ENCODE measurements at regions of chr5 and their contacts with region 1.

Region 1: DNA sequence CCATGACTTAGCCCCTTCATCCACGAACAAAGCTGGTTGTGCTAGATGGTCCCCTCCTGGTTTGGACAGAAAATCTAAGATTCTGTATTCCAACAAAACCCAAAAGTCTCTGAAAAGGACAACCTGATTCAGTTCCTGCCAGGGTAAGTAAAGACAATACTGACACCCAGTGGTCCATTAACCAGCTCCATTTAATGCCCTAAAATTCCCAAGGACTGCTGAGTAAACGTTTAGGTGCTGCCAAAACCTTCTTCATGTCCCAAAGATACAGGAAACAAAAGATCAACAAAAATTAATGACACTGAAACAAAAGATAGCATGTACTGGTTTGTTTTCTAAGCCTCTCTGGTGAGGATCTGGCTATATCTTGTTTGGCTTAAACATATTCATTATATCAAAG is 25.3 kb upstream of the PPP1R2B start:
- DNase-seq: peak in 1 of 2 donors; percentile 27
- ATAC-seq: peak in 7 of 8 donors; percentile 57 to 85 (median 70)
- H3K4me3 ChIP-seq: no peak overlapping the region
- H3K27ac ChIP-seq: no peak overlapping the region
- H3K4me1 ChIP-seq: no peaks in the 10 kb centered on the region
- H3K27me3 ChIP-seq: no peaks in the 10 kb centered on the region
- CTCF ChIP-seq: peak in 8 of 9 donors; percentile 5 to 66 (median 56)

Region 2: DNA sequence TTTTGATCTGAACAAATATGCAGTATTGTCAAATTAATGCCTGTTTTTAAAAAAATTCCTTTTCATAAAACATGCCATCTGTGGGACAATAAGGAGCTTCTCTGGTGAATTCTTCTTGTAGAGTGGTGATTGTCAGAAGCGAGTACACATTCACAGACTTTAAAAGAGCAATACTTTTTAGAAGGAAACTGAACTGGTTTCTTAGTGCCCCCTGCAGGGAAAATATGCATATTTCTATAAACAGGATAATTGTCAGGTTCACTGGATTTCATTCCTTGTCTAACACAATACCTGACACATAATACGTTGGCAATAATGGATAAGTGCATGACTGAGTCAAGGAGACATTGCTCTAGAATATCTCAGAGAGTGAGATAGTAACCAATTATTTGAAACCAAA is 1677.6 kb before region 1 on chr5:
- intact Hi-C with region 1: loop called in 1 of 10 experiments (anchors 10 kb)
- DNase-seq: no peak
- ATAC-seq: no peak
- H3K4me3 ChIP-seq: no peak overlapping the region
- H3K27ac ChIP-seq: no peak overlapping the region
- H3K4me1 ChIP-seq: peaks cover 0 to 8% (median 0%) of the 10 kb centered on the region in 9 donors
- H3K27me3 ChIP-seq: no peaks in the 10 kb centered on the region
- CTCF ChIP-seq: peak in 6 of 9 donors; percentile 15 to 43 (median 32)

Region 3: GRCh38 chr5:155616779-155617392 is 1207.9 kb before region 1 on chr5:
- intact Hi-C with region 1: loop called in 1 of 10 experiments (anchors 10 kb)
- DNase-seq: peak; percentile 13 to 18
- ATAC-seq: peak in 3 of 8 donors; percentile 45 to 55 (median 51)
- H3K4me3 ChIP-seq: no peak overlapping the region
- H3K27ac ChIP-seq: no peak overlapping the region
- H3K4me1 ChIP-seq: peaks cover 0 to 5% (median 0%) of the 10 kb centered on the region in 9 donors
- H3K27me3 ChIP-seq: no peaks in the 10 kb centered on the region
- CTCF ChIP-seq: peak; percentile 30 to 70 (median 56)

Region 4: GRCh38 chr5:155746367-155747038 is 1078.3 kb before region 1 on chr5:
- intact Hi-C with region 1: loop called in 1 of 10 experiments (anchors 10 kb)
- DNase-seq: no peak
- ATAC-seq: no peak
- H3K4me3 ChIP-seq: no peak overlapping the region
- H3K27ac ChIP-seq: no peak overlapping the region
- H3K4me1 ChIP-seq: no peaks in the 10 kb centered on the region
- H3K27me3 ChIP-seq: no peaks in the 10 kb centered on the region
- CTCF ChIP-seq: no peak

Region 5: DNA sequence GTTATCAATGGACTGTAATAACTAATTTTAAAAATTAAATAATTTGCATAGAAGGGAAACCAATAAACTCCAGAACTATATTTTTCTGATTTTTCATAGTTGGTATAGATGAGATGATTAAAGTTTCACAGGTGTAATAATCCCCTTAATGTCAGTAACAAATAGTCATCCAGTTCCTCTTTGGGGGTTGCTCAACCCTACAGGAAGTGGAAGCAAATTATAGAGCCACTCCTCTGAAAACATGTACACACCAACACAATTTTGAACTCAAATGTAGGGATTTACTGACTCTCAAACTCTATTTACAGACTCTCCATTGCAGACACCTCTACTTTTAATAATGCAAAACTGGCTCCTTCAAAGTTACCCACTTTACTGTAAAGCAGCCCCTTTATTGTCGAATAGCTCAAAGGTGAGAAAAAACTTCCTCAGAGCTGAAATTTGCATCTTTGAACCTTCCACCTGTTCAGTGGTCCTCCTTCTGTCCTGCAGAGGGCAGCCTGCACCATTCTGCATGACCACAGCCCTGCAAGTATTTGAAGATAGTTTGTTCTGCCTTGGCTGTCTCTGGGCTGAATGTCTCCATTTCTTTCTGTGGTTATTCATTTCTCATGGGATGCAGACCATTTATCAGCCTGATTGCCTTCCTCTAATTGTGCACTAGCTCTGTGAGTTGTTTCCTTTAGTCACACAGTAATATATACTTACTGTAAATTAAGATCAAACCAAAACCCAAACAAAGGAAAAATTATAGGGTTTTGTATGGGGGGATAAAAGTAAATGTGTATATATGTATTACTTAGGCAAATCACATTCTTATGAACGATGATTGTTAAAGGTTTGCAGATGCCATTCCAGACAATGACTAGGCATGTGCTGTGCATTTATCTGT is 881.0 kb before region 1 on chr5:
- intact Hi-C with region 1: loop called in 7 of 10 experiments (anchors 5 to 10 kb)
- DNase-seq: peak; percentile 27 to 31
- ATAC-seq: peak in 7 of 8 donors; percentile 65 to 89 (median 75)
- H3K4me3 ChIP-seq: no peak overlapping the region
- H3K27ac ChIP-seq: no peak overlapping the region
- H3K4me1 ChIP-seq: peaks cover 0 to 4% (median 0%) of the 10 kb centered on the region in 9 donors
- H3K27me3 ChIP-seq: no peaks in the 10 kb centered on the region
- CTCF ChIP-seq: peak; percentile 31 to 83 (median 72)

Region 6: DNA sequence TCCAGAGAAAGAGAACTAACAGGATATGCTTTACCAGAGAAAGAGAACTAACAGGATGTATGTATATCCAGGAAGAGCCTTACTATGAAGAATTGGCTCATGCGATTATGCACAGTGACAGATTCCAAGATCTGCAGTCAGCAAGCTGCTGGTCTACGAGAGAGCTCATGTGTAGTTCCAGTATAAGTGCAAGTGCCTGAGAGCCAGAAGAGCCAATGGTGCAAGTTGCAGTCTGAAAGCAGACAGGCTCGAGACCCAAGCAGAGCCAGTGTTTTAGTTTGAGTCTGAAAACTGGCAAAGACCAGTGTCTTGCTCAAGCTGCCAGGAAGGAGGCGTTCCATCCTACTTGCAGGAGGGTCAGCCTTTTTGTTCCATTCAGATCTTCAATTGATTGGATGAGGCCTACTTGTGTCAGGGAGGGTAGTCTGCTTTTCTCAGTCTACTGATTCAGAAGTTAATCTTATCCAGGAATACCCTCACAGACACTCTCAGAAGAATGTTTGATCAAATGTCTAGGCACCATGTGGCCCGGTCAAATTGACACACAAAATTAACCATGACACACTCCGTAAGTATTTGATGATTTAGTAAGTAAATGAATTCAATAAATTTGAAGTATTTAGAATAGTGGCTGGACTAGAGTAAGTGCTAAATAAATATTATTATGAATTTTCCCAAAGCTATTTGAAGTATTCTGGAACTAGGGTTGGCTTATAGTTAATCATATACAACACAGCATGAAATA is 869.9 kb before region 1 on chr5:
- intact Hi-C with region 1: loop called in 1 of 10 experiments (anchors 10 kb)
- DNase-seq: no peak
- ATAC-seq: no peak
- H3K4me3 ChIP-seq: no peak overlapping the region
- H3K27ac ChIP-seq: no peak overlapping the region
- H3K4me1 ChIP-seq: peaks cover 0 to 39% (median 9%) of the 10 kb centered on the region in 9 donors
- H3K27me3 ChIP-seq: no peaks in the 10 kb centered on the region
- CTCF ChIP-seq: no peak

Region 7: GRCh38 chr5:156147251-156147947 is 677.4 kb before region 1 on chr5:
- intact Hi-C with region 1: no loop called
- DNase-seq: no peak
- ATAC-seq: peak in 2 of 8 donors; percentile 42 to 46
- H3K4me3 ChIP-seq: no peak overlapping the region
- H3K27ac ChIP-seq: no peak overlapping the region
- H3K4me1 ChIP-seq: peaks cover 0 to 17% (median 10%) of the 10 kb centered on the region in 9 donors
- H3K27me3 ChIP-seq: no peaks in the 10 kb centered on the region
- CTCF ChIP-seq: no peak

Region 8: GRCh38 chr5:156394642-156395305 is 430.0 kb before region 1 on chr5:
- intact Hi-C with region 1: no loop called
- DNase-seq: peak in 1 of 2 donors; percentile 23
- ATAC-seq: peak in 5 of 8 donors; percentile 21 to 55 (median 37)
- H3K4me3 ChIP-seq: no peak overlapping the region
- H3K27ac ChIP-seq: peak overlapping the region in 8 of 10 donors; percentile 3 to 70 (median 56)
- H3K4me1 ChIP-seq: peaks cover 2 to 57% (median 34%) of the 10 kb centered on the region in 9 donors
- H3K27me3 ChIP-seq: no peaks in the 10 kb centered on the region
- CTCF ChIP-seq: no peak

Region 9: DNA sequence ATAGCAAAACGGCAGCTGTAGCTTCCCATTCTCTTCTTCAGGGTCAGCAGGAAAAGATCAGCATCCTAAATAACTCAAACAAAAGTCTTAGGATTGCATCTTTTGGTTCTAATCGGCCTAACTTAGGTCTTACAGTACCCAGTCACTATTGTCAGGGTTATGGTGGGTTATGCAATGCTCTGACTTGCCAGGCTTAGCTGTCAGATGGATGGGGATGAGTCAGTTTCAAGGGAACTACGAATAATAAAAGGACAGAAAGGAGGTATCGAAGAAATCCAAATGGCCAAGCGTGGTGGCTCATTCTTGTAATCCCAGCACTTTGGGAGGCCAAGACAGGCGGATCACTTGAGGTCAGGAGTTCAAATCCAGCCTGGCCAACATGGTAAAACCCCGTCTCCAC is 71.7 kb after region 1 on chr5:
- intact Hi-C with region 1: no loop called
- DNase-seq: no peak
- ATAC-seq: no peak
- H3K4me3 ChIP-seq: no peak overlapping the region
- H3K27ac ChIP-seq: no peak overlapping the region
- H3K4me1 ChIP-seq: no peaks in the 10 kb centered on the region
- H3K27me3 ChIP-seq: no peaks in the 10 kb centered on the region
- CTCF ChIP-seq: no peak

Region 10: GRCh38 chr5:156981481-156981880 is 156.7 kb after region 1 on chr5:
- intact Hi-C with region 1: no loop called
- DNase-seq: no peak
- ATAC-seq: no peak
- H3K4me3 ChIP-seq: no peak overlapping the region
- H3K27ac ChIP-seq: no peak overlapping the region
- H3K4me1 ChIP-seq: no peaks in the 10 kb centered on the region
- H3K27me3 ChIP-seq: peaks cover 0 to 10% (median 0%) of the 10 kb centered on the region in 7 donors
- CTCF ChIP-seq: no peak

Region 11: DNA sequence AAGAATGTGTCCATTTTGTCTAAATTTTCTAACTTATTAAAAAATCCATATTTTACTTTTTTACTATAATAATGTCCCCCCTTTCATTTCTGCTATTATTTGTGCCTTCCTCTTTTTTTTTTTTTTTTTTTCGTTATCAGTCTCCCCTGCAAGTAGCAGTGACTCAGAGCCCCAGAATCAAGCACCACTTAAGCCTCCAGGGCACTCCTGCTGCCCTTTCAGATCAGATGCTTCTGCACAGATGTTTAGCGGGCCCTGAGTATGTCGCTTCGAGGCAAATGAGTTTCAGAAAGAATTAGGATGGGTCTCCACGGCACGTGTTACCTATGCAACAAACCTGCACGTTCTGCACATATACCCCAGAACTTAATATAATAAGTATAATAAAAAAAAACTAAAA is 306.1 kb after region 1 on chr5:
- intact Hi-C with region 1: loop called in 1 of 10 experiments (anchors 5 kb)
- DNase-seq: no peak
- ATAC-seq: peak in 6 of 8 donors; percentile 25 to 83 (median 59)
- H3K4me3 ChIP-seq: no peak overlapping the region
- H3K27ac ChIP-seq: no peak overlapping the region
- H3K4me1 ChIP-seq: peaks cover 0 to 28% (median 10%) of the 10 kb centered on the region in 9 donors
- H3K27me3 ChIP-seq: no peaks in the 10 kb centered on the region
- CTCF ChIP-seq: no peak